ENCODE measurements at regions of chr10 and their contacts with region 1.

Region 1: DNA sequence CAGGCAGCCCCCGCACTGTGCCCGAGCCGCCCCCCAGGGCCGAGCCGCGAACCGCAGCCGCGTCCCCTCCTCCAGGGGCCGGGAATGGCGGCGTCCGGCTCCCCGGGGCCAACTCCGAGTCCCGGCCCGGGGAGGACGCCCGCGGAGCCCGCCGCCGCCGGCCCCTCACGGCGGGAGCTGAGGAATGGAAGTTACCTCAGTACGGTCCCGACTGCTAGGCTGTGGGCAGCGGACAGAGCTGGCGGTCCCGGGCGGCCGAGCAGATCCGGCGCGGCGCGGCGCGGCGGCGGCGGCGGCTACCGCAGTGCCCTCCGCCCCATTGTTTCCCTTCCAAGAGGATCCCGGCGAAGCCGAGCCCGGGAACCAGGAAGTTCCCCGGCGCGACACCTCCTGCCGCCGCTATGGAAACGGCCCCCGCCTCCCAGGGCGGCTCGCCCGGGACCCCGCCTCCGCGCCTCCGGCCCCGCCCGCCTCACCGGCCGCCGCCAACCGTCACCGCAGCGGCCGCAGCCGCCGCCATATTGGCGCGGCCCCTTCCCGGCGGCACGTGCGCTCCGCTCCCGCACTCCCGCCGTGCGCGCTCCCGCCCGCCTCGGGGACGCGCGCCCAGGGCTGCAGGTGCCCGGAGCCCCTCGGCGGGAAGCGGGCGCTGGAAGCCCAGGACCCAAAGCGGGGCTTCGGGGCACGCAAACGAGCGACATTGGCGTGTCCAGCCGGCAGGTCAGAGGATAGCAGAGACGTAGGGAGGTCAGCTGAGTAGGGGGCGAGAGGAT is at the start of gene USP6NL:
- DNase-seq: peak; percentile 91 to 93 (median 92)
- ATAC-seq: peak; percentile 68
- H3K4me3 ChIP-seq: peak within 1 kb of the TSS; percentile 79
- H3K27ac ChIP-seq: peak within 1 kb of the TSS; percentile 98
- H3K4me1 ChIP-seq: peaks cover 24 to 40% of the 10 kb centered on the region in 2 experiments
- H3K27me3 ChIP-seq: no peaks in the 10 kb centered on the region
- CTCF ChIP-seq: no peak
- EP300 ChIP-seq: peak; percentile 69
- POLR2A ChIP-seq: peak; percentile 83
- RAD21 ChIP-seq: peak in 1 of 2 experiments; percentile 13; a peak in 1 of 4 replicates
- polyA plus RNA-seq, gene USP6NL: 3.2 to 3.8 TPM

Region 2: DNA sequence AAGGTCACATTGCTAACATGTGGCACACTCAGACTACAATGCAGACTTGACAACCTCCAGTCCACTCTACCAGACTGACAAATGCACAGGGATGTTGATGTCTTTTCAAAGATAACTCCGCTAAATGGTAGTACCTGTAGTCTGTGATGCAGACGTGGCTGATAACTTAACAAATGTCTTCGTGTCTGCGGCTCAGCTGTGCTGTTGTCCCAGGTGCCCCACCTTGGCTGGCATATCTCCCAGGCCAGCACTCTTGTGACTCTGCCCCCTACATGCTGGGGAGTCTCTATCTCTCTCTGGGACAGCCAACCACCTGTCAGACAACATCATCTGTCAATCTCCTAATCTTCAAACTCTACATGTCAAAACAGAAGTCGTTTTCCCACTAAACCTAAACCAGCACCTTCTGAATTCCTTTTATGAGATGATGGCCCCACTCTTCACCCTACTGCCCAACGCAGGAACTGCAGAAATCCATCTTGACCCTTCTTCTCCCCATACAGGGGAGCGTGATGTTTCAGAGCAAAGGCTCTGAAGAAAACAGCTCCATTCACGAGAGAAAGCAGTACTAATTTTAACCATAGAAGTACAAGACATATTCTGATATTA is 156.4 kb before region 1 on chr10:
- CTCF ChIA-PET with region 1: no interaction called
- POLR2A ChIA-PET with region 1: no interaction called
- in situ Hi-C with region 1: no loop called
- intact Hi-C with region 1: no loop called
- DNase-seq: no peak
- ATAC-seq: peak; percentile 64
- H3K4me3 ChIP-seq: no peak overlapping the region
- H3K27ac ChIP-seq: no peak overlapping the region
- H3K4me1 ChIP-seq: peaks cover 10 to 16% of the 10 kb centered on the region in 2 experiments
- H3K27me3 ChIP-seq: no peaks in the 10 kb centered on the region
- CTCF ChIP-seq: peak; percentile 23 to 48 (median 43); a peak in 5 of 6 replicates
- EP300 ChIP-seq: no peak
- POLR2A ChIP-seq: no peak
- RAD21 ChIP-seq: no peak

Region 3: GRCh38 chr10:11515596-11516430 is 95.6 kb before region 1 on chr10:
- CTCF ChIA-PET with region 1: no interaction called
- POLR2A ChIA-PET with region 1: no interaction called
- in situ Hi-C with region 1: no loop called
- intact Hi-C with region 1: loop called (anchors 2 kb)
- DNase-seq: peak; percentile 47 to 78 (median 56)
- ATAC-seq: peak; percentile 93
- H3K4me3 ChIP-seq: no peak overlapping the region
- H3K27ac ChIP-seq: peak overlapping the region; percentile 41; the same call in 2 of the 3 replicates
- H3K4me1 ChIP-seq: peaks cover 0 to 9% of the 10 kb centered on the region in 2 experiments; a peak in 2 of 5 replicates
- H3K27me3 ChIP-seq: no peaks in the 10 kb centered on the region
- CTCF ChIP-seq: peak; percentile 67 to 91 (median 84)
- EP300 ChIP-seq: no peak
- POLR2A ChIP-seq: no peak
- RAD21 ChIP-seq: peak; percentile 97 to 98

Region 4: GRCh38 chr10:11595395-11595692 is 16.1 kb before region 1 on chr10:
- CTCF ChIA-PET with region 1: no interaction called
- POLR2A ChIA-PET with region 1: interaction called, 18 read pairs
- in situ Hi-C with region 1: no loop called
- intact Hi-C with region 1: no loop called
- DNase-seq: no peak
- ATAC-seq: peak; percentile 4
- H3K4me3 ChIP-seq: no peak overlapping the region
- H3K27ac ChIP-seq: no peak overlapping the region; the same call in 2 of the 3 replicates
- H3K4me1 ChIP-seq: peaks cover 7 to 37% of the 10 kb centered on the region in 2 experiments; a peak in 4 of 5 replicates
- H3K27me3 ChIP-seq: no peaks in the 10 kb centered on the region
- CTCF ChIP-seq: no peak
- EP300 ChIP-seq: no peak
- POLR2A ChIP-seq: no peak
- RAD21 ChIP-seq: no peak

Region 5: GRCh38 chr10:11684717-11685645 is 73.5 kb after region 1 on chr10:
- CTCF ChIA-PET with region 1: no interaction called
- POLR2A ChIA-PET with region 1: interaction called, 8 read pairs
- in situ Hi-C with region 1: no loop called
- intact Hi-C with region 1: loop called (anchors 2 kb)
- DNase-seq: peak; percentile 72 to 90 (median 78)
- ATAC-seq: peak; percentile 85
- H3K4me3 ChIP-seq: 0 out of 2 replicates have a peak overlapping the region, but pooled peaks have one; percentile 5
- H3K27ac ChIP-seq: peak overlapping the region; percentile 72
- H3K4me1 ChIP-seq: peaks cover 38 to 42% of the 10 kb centered on the region in 2 experiments
- H3K27me3 ChIP-seq: peaks cover 0 to 9% of the 10 kb centered on the region in 2 experiments; a peak in 1 of 5 replicates
- CTCF ChIP-seq: no peak
- EP300 ChIP-seq: peak; percentile 73; the same call in 1 of the 2 replicates
- POLR2A ChIP-seq: no peak; the same call in 1 of the 2 replicates
- RAD21 ChIP-seq: 0 out of 4 replicates have a peak, but pooled peaks of 1 of the 2 experiments have one; percentile 4

Region 6: GRCh38 chr10:11698691-11699549 is 87.5 kb after region 1 on chr10:
- CTCF ChIA-PET with region 1: no interaction called
- POLR2A ChIA-PET with region 1: no interaction called
- in situ Hi-C with region 1: no loop called
- intact Hi-C with region 1: no loop called
- DNase-seq: no peak
- ATAC-seq: no peak
- H3K4me3 ChIP-seq: no peak overlapping the region
- H3K27ac ChIP-seq: no peak overlapping the region
- H3K4me1 ChIP-seq: peaks cover 4 to 6% of the 10 kb centered on the region in 2 experiments; a peak in 2 of 5 replicates
- H3K27me3 ChIP-seq: no peaks in the 10 kb centered on the region
- CTCF ChIP-seq: no peak
- EP300 ChIP-seq: no peak
- POLR2A ChIP-seq: no peak
- RAD21 ChIP-seq: no peak

Region 7: DNA sequence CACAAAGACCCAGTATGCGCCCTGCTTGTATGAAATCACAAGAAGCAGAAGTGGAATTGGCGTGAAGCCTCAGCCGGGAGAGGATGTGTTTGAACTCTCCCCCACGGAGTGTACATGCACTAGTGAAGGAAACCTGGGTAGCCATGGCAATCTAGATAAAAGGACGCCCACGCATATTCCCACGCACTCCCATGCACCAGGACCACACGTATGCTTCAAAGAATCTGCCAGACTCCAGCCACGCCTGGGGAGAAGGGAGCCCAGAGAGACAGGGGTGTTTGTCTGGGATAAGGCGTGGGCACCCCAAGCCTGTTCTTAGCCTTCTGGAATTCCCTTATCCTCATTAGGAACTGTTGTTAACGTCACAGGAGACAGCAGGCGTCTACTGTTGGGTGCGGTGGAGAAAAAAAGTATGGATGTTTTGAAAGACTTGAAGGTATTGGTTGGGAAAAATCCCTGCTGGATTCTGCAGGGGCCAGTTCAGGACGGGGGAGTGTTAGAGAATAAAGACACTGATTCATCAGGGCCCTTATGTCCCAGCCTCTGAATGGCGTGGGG is 101.8 kb after region 1 on chr10:
- CTCF ChIA-PET with region 1: no interaction called
- POLR2A ChIA-PET with region 1: interaction called, 5 read pairs
- in situ Hi-C with region 1: no loop called
- intact Hi-C with region 1: loop called (anchors 1 kb)
- DNase-seq: peak; percentile 53 to 78 (median 73)
- ATAC-seq: peak; percentile 18
- H3K4me3 ChIP-seq: no peak overlapping the region
- H3K27ac ChIP-seq: no peak overlapping the region
- H3K4me1 ChIP-seq: peaks cover 41 to 45% of the 10 kb centered on the region in 2 experiments
- H3K27me3 ChIP-seq: no peaks in the 10 kb centered on the region
- CTCF ChIP-seq: no peak
- EP300 ChIP-seq: no peak
- POLR2A ChIP-seq: no peak
- RAD21 ChIP-seq: no peak

Region 8: DNA sequence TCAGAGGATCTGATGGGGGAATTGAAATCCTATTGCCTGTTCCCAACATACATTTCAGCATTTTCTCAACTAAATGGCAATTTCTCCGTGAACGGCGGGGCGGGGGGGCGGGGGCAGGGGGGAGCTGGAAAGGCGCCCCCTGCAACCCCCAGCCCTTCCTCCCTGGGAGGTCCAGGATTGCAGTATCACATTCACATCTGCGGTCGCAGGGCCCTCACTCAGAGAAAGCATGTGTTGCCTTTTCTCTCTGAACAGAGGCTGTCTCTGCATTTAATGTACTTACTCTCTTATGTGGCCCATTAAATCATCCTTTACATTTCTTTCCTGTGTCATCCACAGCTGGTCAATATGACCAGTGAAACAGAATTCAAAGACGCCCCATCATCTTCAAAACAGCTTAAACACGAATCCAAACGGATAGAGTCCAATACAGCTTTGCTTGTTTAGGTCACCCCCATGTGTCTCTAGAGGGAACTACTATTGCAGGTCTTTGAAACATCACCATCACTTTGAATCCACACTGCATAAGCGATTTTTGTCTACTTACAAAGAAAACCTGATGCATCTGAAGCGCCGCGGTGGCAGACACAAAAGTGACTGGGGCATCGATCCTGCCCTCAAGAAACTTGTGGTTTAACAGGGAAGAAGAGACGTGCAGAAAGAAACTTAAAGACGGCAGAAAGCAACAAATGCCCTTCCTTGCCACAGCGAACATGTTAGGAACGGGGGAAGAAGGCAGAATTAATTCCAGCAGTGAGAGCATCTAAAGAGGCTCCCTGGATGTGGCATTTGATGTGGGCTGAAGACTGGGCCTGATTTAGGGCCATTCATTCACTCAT is 113.7 kb after region 1 on chr10:
- CTCF ChIA-PET with region 1: no interaction called
- POLR2A ChIA-PET with region 1: interaction called, 3 read pairs
- in situ Hi-C with region 1: no loop called
- intact Hi-C with region 1: loop called (anchors 5 kb)
- DNase-seq: peak; percentile 27 to 81 (median 60)
- ATAC-seq: peak; percentile 96
- H3K4me3 ChIP-seq: no peak overlapping the region
- H3K27ac ChIP-seq: no peak overlapping the region
- H3K4me1 ChIP-seq: peaks cover 0 to 5% of the 10 kb centered on the region in 2 experiments; a peak in 4 of 5 replicates
- H3K27me3 ChIP-seq: no peaks in the 10 kb centered on the region
- CTCF ChIP-seq: peak; percentile 78 to 94 (median 86)
- EP300 ChIP-seq: 0 out of 2 replicates have a peak, but pooled peaks have one; percentile 21
- POLR2A ChIP-seq: no peak
- RAD21 ChIP-seq: peak; percentile 99 to 100

Region 9: DNA sequence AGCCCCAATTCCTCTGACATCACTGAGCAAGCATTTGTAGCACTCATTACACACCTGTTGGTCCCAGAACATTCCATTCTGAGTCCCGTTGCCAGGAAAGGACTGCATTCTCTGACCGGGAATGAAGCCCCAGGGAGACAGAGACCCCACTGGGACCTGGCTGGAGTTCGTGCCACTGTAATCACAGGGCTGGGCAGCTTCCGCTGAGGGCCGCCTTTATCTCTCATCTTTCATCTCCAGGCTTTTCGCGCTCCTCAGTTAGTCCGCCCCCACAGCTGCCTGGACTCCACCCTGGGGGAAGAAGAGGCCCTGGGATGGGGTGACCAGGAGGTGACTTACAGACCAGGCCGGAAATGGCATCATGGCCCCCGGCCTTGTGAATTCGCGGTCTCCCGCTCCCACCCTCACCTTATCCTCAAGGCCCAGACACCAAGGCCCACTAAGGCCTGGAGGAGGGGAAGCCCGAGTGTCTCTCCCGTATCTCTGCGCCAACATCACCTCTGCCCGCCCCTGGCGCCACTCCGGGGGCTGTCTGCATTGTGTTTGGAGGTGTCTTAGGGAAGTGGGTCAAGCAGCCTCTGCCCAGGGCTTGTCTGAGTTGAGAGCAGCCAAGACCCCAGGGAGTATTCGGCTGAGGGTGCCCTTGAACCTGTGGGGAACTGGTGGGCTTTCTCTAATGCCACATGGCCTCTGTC is 287.1 kb after region 1 on chr10:
- CTCF ChIA-PET with region 1: no interaction called
- POLR2A ChIA-PET with region 1: interaction called, 4 read pairs
- in situ Hi-C with region 1: no loop called
- intact Hi-C with region 1: loop called (anchors 10 kb)
- DNase-seq: peak; percentile 94 to 98 (median 96)
- ATAC-seq: peak; percentile 82
- H3K4me3 ChIP-seq: peak overlapping the region; percentile 47
- H3K27ac ChIP-seq: peak overlapping the region; percentile 98
- H3K4me1 ChIP-seq: peaks cover 33 to 60% of the 10 kb centered on the region in 2 experiments
- H3K27me3 ChIP-seq: no peaks in the 10 kb centered on the region
- CTCF ChIP-seq: no peak
- EP300 ChIP-seq: peak; percentile 87
- POLR2A ChIP-seq: peak; percentile 96
- RAD21 ChIP-seq: no peak

Measured in K562 (cell line).